T-cell (primary cell): ENCODE measurements at regions of chr14 and their contacts with region 1.

Region 1: DNA sequence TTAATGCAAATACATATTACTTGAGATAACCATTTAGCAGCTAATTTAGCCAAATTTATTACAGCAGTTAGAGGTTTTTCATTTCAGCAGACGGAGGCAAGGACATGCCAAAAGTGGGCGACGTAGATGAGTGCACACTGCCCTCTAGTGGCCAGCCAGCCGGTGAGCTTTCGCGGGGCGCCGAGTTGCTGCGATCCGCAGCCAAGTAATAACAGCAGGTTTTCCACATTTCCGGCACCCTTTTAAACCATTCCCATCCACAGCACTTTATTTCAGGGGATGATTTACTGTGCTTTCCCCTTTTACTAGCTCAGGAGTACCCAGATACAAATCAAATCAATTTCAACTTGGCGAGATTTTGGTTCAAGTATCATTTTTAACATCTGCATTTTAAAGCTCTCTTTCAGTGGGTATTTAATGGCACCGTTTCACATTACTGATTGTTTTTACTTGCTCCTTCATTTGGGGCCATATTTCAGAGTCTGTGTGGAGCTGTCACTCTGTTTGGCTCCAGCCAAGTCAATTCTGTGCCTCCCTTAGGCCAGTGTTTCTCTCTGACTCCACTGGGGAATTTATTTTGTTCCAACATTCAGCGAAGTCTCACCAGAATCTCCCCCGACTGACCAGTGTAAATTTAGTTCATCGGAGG is 158.0 kb downstream of the EGLN3 start:
- DNase-seq: peak in 30 of 35 experiments; percentile 9 to 70 (median 38)
- ATAC-seq: peak in 3 of 4 experiments; percentile 45 to 58 (median 56)
- H3K4me3 ChIP-seq: no peak overlapping the region
- H3K4me3 Mint-ChIP-seq: peak overlapping the region; percentile 29 to 44 (median 42)
- H3K27ac ChIP-seq: no peak overlapping the region
- H3K27ac Mint-ChIP-seq: peak overlapping the region in 1 of 2 donors; percentile 20
- H3K4me1 ChIP-seq: peaks cover 0 to 7% of the 10 kb centered on the region in 2 experiments
- H3K4me1 Mint-ChIP-seq: peaks cover 13 to 19% (median 14%) of the 10 kb centered on the region in 3 donors
- H3K27me3 ChIP-seq: no peaks in the 10 kb centered on the region
- H3K27me3 Mint-ChIP-seq: peaks cover 34 to 48% of the 10 kb centered on the region in 2 donors

Region 2: DNA sequence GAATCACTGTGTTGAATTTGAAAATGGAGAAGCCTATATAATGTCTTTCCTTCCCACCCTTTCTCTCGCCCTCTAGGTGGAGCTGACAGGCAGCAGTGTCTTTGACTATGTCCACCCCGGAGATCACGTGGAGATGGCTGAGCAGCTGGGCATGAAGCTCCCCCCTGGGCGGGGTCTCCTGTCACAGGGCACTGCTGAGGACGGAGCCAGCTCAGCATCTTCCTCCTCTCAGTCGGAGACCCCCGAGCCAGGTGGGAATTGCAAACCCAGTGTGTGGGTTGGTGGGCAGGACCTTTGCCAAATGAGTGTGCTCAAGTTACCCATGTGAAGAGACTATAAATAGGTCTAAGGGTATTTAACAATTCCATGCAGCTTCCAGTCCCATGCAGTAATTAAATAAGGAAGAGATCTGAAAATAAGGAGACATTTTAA is 116.7 kb before region 1 on chr14:
- CTCF ChIA-PET with region 1: no interaction called
- POLR2A ChIA-PET with region 1: no interaction called
- DNase-seq: no peak
- ATAC-seq: no peak
- H3K4me3 ChIP-seq: no peak overlapping the region
- H3K4me3 Mint-ChIP-seq: no peak overlapping the region
- H3K27ac ChIP-seq: no peak overlapping the region
- H3K27ac Mint-ChIP-seq: no peak overlapping the region
- H3K4me1 ChIP-seq: no peaks in the 10 kb centered on the region
- H3K4me1 Mint-ChIP-seq: no peaks in the 10 kb centered on the region
- H3K27me3 ChIP-seq: no peaks in the 10 kb centered on the region
- H3K27me3 Mint-ChIP-seq: peaks cover 0 to 4% of the 10 kb centered on the region in 2 donors

Region 3: DNA sequence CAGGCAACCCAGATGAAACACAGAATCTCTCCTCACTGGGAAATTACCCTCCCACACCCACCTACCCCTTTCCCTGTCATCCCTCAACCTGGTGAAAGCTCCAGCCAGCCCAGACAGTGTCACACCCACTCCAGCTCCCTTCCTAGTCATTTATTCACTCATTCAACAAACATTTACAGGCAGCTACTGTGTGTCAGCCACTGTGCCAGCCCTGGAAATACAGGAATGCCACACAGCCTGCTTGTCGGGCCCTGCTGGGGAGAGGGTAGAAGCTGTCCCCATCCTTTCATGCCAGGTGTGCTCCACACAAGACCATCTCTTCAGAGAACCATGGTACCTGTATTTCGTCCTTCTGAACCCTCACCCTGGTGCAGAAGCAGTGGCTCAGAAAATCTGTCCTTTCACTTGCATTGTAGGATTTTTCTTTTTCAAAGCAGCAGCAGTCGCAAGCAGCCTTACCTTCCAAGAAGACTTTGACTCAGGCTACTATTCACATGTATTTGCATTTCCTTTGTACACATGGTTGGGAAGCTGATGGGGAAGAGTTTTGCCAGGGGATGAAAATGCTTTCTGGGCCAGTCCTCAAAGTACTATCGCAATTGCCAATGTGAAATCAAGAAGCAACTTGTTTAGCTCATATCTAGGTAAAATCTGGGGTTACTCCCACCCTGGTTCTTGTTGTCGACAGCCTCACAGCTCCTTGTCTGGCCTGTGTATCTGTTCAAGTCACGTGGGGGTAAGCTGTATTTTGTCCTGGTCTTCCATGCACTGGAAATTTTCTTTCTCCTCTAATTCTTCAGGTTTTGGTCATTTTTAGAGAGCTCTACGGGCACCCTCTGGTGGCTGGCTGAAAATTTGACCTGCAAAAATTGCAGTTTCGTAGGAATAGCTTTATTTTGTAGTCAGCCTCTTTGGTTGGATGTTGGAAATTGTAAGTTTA is 305.5 kb after region 1 on chr14:
- CTCF ChIA-PET with region 1: interaction called in 1 of 2 experiments, 10 read pairs
- POLR2A ChIA-PET with region 1: no interaction called
- DNase-seq: peak in 5 of 35 experiments; percentile 1 to 25 (median 7)
- ATAC-seq: no peak
- H3K4me3 ChIP-seq: no peak overlapping the region
- H3K4me3 Mint-ChIP-seq: no peak overlapping the region
- H3K27ac ChIP-seq: no peak overlapping the region
- H3K27ac Mint-ChIP-seq: no peak overlapping the region
- H3K4me1 ChIP-seq: peaks cover 0 to 2% of the 10 kb centered on the region in 2 experiments
- H3K4me1 Mint-ChIP-seq: peaks cover 12 to 20% (median 14%) of the 10 kb centered on the region in 3 donors
- H3K27me3 ChIP-seq: no peaks in the 10 kb centered on the region
- H3K27me3 Mint-ChIP-seq: no peaks in the 10 kb centered on the region